ENCODE measurements at regions of chr1 and their contacts with region 1.

Region 1: DNA sequence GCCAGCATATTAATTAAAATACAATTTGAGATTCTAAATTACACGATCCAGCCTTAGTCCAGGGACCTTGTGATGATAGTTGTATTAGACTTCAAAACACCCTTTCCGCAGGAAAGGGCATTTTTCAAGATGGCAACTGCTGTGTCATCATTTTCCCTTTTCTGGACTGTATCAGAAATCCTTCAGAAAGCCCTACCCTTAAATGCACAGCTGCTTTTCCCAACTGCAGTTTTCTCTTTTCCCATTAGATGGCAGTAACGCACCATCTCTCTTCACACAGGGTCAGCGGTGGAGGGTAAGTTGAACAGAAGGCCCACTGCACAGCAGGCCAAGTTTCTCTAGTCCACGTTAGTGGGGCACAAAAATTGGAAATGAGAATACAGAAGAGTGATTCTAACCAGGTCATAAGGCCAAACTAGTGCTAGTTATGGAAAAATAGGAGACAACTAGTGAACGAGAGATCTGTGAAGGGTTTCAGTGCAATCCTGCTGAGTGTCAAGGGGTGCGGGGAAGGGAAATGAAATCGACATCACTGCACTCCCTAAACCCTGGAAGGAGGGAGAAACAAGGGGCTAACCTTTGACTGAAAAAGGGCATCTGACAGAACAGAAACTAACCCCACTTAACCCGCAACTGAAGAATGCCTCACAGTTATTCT is 22.1 kb upstream of the TDRD10 start:
- DNase-seq: peak; percentile 72
- ATAC-seq: peak; percentile 95
- H3K4me3 Mint-ChIP-seq: no peak overlapping the region
- H3K27ac Mint-ChIP-seq: no peak overlapping the region
- H3K4me1 Mint-ChIP-seq: peaks cover 6% of the 10 kb centered on the region
- H3K27me3 Mint-ChIP-seq: peaks cover 13% of the 10 kb centered on the region

Region 2: DNA sequence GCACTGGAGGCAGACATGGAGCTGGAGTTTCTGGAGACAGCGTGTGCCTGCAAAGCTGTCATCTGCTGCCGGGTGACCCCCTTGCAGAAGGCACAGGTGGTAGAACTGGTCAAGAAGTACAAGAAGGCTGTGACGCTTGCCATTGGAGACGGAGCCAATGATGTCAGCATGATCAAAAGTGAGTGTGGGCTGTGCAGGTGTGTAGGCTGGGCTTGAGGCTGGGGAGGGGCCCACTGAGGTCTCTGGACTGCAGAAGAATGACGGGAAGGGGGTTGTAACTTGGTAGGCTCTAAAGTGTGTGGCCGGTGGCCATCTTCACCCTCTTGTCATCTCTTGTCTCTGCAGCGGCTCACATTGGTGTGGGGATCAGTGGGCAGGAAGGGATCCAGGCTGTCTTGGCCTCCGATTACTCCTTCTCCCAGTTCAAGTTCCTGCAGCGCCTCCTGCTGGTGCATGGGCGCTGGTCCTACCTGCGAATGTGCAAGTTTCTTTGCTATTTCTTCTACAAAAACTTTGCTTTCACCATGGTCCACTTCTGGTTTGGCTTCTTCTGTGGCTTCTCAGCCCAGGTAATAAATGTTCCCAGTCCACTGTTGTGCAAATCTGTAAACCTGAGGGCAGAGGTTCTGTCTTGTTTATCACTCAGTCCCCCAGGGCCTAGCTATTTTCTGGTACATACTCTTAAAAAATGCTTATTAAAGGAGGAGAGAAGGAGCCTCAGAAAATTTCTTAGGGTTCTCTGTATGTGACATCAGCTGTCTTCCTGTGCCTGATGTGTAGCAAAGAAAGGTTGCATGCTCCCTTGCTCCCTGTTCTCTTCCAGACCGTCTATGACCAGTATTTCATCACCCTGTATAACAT is 134.7 kb before region 1 on chr1:
- CTCF ChIA-PET with region 1: interaction called, 12 read pairs
- POLR2A ChIA-PET with region 1: no interaction called
- DNase-seq: peak; percentile 77
- ATAC-seq: no peak
- H3K4me3 Mint-ChIP-seq: no peak overlapping the region
- H3K27ac Mint-ChIP-seq: no peak overlapping the region
- H3K4me1 Mint-ChIP-seq: peaks cover 60% of the 10 kb centered on the region
- H3K27me3 Mint-ChIP-seq: no peaks in the 10 kb centered on the region

Region 3: GRCh38 chr1:154404984-154405761 is 74.7 kb before region 1 on chr1 and contains the start of gene IL6R:
- CTCF ChIA-PET with region 1: interaction called, 21 read pairs
- POLR2A ChIA-PET with region 1: no interaction called
- DNase-seq: peak; percentile 72
- ATAC-seq: peak; percentile 66
- H3K4me3 Mint-ChIP-seq: peak within 1 kb of the TSS; percentile 57
- H3K27ac Mint-ChIP-seq: peak within 1 kb of the TSS; percentile 39
- H3K4me1 Mint-ChIP-seq: peaks cover 78% of the 10 kb centered on the region
- H3K27me3 Mint-ChIP-seq: peaks cover 33% of the 10 kb centered on the region
- total RNA-seq, gene IL6R: 0.16 to 0.53 TPM

Region 4: DNA sequence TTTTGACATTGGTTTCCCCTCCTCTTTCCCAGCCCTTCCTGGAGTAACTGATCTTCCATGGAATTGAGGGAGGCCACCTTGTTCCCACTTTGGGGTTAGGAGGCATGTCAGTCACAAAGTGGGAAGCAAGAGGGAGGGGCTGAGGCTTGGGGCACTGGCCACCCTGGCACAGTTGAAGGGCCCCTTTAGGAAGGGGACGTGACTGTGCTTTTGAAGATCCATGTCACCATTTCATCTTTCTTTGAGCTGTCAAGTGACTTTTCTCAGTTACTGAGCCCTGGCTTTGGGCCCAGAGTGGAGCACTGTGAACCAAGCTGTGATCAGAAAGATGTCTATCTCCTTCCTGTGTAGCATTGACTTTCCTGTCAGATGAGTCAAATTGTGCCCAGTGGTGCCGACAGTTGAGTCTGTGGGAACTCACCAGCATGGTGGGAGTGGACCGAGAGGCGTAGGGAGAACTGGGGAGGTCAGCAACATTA is 16.3 kb before region 1 on chr1:
- CTCF ChIA-PET with region 1: interaction called, 70 read pairs
- POLR2A ChIA-PET with region 1: no interaction called
- DNase-seq: peak; percentile 64
- ATAC-seq: peak; percentile 87
- H3K4me3 Mint-ChIP-seq: no peak overlapping the region
- H3K27ac Mint-ChIP-seq: peak overlapping the region; percentile 48
- H3K4me1 Mint-ChIP-seq: peaks cover 36% of the 10 kb centered on the region
- H3K27me3 Mint-ChIP-seq: peaks cover 3% of the 10 kb centered on the region

Region 5: GRCh38 chr1:154493276-154493675 is 13.4 kb after region 1 on chr1:
- CTCF ChIA-PET with region 1: interaction called, 39 read pairs
- POLR2A ChIA-PET with region 1: no interaction called
- DNase-seq: peak; percentile 45
- ATAC-seq: peak; percentile 69
- H3K4me3 Mint-ChIP-seq: peak overlapping the region; percentile 26
- H3K27ac Mint-ChIP-seq: peak overlapping the region; percentile 72
- H3K4me1 Mint-ChIP-seq: peaks cover 36% of the 10 kb centered on the region
- H3K27me3 Mint-ChIP-seq: peaks cover 21% of the 10 kb centered on the region

Region 6: DNA sequence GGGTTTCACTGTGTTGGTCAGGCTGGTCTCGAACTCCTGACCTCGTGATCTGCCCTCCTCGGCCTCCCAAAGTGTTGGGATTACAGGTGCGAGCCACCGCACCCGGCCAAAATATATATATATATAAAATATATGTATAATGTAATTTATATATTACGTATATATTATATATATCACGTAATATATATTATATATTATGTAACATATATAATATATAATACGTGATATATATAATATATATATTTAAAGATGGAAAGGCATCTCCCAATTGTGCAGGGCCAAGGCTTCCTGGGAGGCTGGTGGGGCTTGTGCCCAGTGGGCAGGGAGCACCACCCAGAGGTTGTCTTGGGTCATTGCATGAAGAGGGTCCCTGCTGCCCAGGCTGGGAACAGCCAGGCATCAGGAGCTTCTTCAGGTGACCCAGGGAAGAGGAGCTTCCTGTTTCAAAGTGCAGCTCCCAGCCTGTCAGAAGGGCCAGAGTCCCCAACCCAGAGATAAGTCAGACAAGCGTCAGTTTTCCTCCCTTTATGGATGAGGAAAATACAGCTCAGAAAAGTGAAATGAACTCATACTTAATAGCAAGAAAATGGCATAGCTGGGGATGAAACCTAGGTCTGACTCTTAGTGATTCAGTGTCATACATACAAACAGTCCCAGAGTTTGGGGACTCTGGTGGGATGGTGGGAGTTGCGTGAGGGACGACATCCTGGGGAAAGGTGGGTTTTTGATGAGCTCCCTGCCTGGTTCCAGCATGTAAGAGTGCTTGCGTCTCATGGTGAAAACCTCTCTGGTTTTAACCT is 66.6 kb after region 1 on chr1:
- CTCF ChIA-PET with region 1: interaction called, 119 read pairs
- POLR2A ChIA-PET with region 1: interaction called, 3 read pairs
- DNase-seq: peak; percentile 65
- ATAC-seq: peak; percentile 80
- H3K4me3 Mint-ChIP-seq: no peak overlapping the region
- H3K27ac Mint-ChIP-seq: no peak overlapping the region
- H3K4me1 Mint-ChIP-seq: peaks cover 8% of the 10 kb centered on the region
- H3K27me3 Mint-ChIP-seq: no peaks in the 10 kb centered on the region

Region 7: GRCh38 chr1:154551474-154551971 is 71.6 kb after region 1 on chr1:
- CTCF ChIA-PET with region 1: interaction called, 119 read pairs
- POLR2A ChIA-PET with region 1: interaction called, 3 read pairs
- DNase-seq: no peak
- ATAC-seq: no peak
- H3K4me3 Mint-ChIP-seq: no peak overlapping the region
- H3K27ac Mint-ChIP-seq: no peak overlapping the region
- H3K4me1 Mint-ChIP-seq: peaks cover 22% of the 10 kb centered on the region
- H3K27me3 Mint-ChIP-seq: no peaks in the 10 kb centered on the region

Measured in activated CD8-positive, alpha-beta T cell treated with anti-CD3 and anti-CD28 coated beads, Interleukin-2, amount 10 ng/mL, durations not matched to agents 7 days and 5 days (primary cell).